ENCODE measurements at regions of chr1 and their contacts with region 1.

Region 1: DNA sequence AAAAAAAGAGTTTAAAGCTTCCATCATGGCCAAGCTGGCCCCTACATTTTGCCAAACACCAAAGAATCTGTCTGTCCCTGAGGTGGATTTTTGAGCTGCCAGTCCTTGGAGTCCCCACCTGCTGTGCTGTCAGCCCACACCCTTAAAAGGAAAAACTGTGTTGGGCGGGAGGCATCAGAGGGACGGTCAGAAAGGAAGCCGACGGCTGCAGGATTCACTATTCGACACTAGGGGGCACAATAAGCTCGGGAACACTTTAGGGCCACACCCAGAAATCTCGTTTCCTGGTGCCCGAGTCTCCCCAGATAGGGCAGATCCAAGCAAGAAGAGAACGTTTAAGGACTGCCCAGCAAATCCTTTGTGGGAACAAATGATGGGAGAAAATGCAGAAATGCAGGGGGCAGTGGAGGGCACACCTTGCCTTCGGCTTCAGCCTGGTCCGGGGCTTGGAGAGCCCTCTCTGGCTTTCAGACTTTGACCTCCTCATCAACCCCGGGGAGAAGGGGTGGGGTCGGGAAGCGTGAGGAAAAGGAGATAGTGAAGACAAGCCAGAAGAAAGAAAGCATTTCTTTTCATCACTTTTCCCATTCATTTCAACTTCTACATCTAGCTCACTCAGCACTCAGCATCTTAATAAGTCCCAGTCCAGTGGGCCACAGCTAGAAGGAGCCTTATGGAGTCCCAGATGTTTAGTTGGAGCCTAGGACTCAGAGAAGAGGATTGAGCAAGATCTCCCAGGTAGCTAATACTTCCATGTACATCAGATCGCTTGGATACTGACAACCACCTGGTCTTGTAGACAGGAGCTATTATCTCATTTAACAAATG is 5.0 kb upstream of the CTTNBP2NL start:
- DNase-seq: peak; percentile 89
- ATAC-seq: peak; percentile 93
- H3K4me3 Mint-ChIP-seq: peak overlapping the region; percentile 76
- H3K27ac Mint-ChIP-seq: peak overlapping the region; percentile 72
- H3K4me1 Mint-ChIP-seq: peaks cover 48% of the 10 kb centered on the region
- H3K27me3 Mint-ChIP-seq: peaks cover 16% of the 10 kb centered on the region

Region 2: GRCh38 chr1:112410673-112411072 is 19.7 kb after region 1 on chr1:
- CTCF ChIA-PET with region 1: interaction called, 15 read pairs
- DNase-seq: no peak
- ATAC-seq: no peak
- H3K4me3 Mint-ChIP-seq: no peak overlapping the region
- H3K27ac Mint-ChIP-seq: no peak overlapping the region
- H3K4me1 Mint-ChIP-seq: no peaks in the 10 kb centered on the region
- H3K27me3 Mint-ChIP-seq: peaks cover 4% of the 10 kb centered on the region

Region 3: GRCh38 chr1:112501810-112502641 is 111.0 kb after region 1 on chr1:
- CTCF ChIA-PET with region 1: interaction called, 17 read pairs
- DNase-seq: peak; percentile 68
- ATAC-seq: peak; percentile 78
- H3K4me3 Mint-ChIP-seq: peak overlapping the region; percentile 49
- H3K27ac Mint-ChIP-seq: no peak overlapping the region
- H3K4me1 Mint-ChIP-seq: peaks cover 9% of the 10 kb centered on the region
- H3K27me3 Mint-ChIP-seq: peaks cover 72% of the 10 kb centered on the region

Region 4: DNA sequence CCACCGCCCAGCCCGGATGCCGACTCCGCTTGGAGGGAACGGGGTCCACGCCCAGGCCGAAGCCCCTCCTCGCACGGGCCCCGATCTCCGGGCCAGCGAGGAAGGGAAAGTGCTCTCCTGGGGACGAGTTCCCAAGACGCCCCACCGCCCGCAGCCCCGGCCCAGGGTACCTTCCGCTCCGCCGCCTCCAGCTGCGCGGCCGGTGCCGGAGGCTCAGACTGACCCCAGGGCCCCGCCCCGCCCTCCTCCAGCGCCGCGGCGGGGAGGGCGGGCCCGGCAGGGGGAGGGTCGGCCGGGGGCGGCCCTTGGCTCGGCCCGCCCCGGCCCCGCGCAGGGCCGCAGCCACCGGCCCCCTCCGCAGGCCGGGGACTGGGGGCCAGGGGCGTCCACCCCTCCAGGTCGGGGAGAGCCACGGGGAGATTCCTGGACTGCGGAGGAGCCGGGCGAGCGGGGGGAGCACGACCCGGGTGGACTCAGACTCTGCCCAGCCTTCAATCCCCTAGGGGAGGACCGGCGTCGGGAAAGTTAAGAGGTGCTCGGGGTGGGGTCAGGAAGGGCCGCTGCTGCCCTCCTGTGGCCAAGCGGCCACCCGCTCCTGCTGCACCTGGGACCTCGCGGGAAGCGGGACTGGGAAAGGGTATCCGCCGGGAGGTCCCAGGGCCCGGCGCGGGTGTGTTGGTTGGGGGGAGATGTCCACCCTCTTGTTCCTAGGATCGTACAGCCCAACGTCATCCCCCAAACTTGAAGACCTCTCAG is 316.1 kb after region 1 on chr1 and contains the start of gene RHOC:
- CTCF ChIA-PET with region 1: interaction called, 37 read pairs
- DNase-seq: peak; percentile 80
- ATAC-seq: peak; percentile 76
- H3K4me3 Mint-ChIP-seq: peak within 1 kb of the TSS; percentile 75
- H3K27ac Mint-ChIP-seq: peak within 1 kb of the TSS; percentile 89
- H3K4me1 Mint-ChIP-seq: peaks cover 44% of the 10 kb centered on the region
- H3K27me3 Mint-ChIP-seq: peaks cover 30% of the 10 kb centered on the region
- total RNA-seq, gene RHOC: 105 to 130 TPM